ENCODE measurements at regions of chr13 and their contacts with region 1.

Region 1: DNA sequence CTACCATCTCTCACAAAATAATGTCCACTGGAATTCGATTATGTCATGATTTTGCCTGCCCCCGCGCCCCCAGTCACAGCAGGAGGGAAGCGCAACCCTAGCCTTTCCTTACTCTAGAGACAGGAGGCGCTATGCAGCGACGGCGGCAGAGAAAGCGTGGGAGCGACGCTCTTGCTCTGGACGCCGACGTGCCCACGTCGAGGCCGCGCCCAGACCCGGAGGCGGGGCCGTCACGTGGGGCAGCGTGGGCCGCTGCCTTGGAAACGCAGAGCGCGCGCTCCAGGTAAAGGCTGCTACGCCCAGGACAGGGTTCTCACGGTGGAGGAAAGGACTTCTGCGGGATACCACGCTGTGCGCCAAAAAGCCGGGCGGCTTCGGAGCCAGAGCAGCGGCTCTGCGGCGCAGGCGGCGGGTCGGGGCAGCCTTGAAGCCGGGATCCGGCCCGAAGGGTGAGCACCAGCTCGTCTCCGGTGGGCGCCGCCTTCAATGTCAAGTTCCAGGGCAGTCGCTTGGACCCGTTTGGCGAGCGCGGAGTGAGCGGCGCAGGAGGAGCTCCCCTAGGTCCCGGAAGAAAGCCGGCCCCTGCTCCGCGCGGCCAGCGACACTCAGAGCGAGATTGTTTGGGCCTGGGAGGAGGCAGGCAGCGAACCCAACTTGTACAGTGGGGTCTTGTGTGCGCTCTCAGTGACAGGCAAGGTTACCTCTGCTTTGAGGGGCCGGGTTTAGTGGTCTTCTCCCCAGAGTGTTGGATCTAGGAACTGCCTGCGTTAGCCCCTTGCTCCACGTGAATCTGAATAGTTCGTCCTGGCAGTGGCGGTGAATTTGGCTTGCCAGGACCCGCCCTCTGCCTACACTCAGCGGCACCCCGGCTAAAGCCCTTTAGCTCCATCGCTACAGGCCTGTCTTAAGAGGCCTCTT is 121.7 kb downstream of the MRPL57 start:
- DNase-seq: peak; percentile 85
- H3K4me3 Mint-ChIP-seq: peak overlapping the region; percentile 81
- H3K27ac Mint-ChIP-seq: no peak overlapping the region
- H3K4me1 Mint-ChIP-seq: peaks cover 20% of the 10 kb centered on the region
- H3K27me3 Mint-ChIP-seq: no peaks in the 10 kb centered on the region

Region 2: DNA sequence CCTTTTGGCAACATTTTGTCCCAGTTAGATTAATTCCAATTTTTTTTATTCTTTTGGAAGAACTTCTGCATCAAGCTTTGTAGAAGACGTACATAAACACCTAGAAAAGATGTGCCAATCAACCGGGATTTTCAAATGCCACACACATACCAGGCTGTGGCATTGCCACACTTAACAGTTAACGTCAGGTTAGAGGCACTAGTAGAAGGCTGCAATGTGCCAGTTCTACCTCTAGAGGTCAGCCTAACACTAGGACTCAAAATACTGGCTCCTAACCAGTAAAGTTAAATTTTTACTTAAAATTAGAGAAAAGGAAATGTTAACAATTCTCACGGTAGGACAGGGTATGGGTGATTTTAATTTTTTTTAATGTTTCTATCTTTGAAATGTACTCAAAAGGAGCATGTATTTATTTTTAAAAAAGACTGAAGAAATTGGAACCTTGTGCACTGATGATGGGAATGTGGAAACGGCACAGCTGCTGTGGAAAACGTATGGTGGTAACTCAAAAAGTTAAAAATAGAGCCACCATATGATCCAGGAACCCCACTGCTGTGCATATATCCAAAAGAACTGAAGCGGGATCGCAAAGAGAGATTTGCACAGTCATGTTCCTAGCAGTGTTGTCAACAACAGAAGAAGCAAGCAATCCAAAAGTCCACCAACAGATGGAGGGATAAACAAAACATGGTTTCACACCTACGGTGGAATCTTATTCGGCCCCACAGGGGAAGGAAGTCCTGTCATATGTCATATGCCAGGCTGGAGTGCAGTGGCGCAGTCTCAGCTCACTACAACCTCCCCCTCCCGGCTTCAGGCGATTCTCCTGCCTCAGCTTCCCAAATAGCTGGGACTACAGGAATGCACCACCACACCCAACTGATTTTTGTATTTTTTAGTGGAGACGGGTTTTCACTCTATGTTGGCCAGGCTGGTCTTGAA is 802.8 kb before region 1 on chr13:
- CTCF ChIA-PET with region 1: no interaction called
- intact Hi-C with region 1: loop called (anchors 10 kb)
- DNase-seq: peak; percentile 81
- H3K4me3 Mint-ChIP-seq: no peak overlapping the region
- H3K27ac Mint-ChIP-seq: no peak overlapping the region
- H3K4me1 Mint-ChIP-seq: no peaks in the 10 kb centered on the region
- H3K27me3 Mint-ChIP-seq: no peaks in the 10 kb centered on the region

Region 3: DNA sequence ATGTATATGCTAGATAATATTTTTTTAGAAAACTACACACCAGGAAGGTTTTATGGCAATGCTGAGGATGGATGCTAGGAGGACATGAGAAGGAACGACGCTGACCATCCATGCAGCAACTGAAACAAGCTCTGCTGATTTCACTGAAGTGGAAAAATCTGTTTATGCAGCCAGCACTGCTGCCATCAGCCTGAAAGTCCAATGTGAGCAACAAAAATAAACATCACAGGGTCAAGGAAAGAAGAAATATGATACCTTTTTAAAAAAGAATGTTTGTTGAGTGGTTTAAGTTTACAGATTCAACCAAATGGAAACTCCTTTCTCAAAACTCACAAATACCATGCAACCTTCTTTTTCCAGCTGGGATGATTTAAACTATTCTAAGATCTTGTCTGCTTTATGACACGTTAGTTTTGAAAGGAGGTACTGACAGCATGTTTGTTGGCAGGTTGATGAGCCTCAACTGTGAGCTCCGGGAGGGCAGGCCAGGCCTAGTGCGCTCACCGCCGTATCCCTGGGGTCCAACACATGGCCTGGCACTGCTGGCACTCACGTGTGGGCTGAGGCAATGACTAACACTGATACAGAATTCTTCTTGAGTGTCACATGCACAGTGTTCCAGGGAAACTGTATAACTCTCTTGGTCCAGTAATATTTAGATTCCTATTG is 283.5 kb before region 1 on chr13:
- CTCF ChIA-PET with region 1: no interaction called
- intact Hi-C with region 1: loop called (anchors 10 kb)
- DNase-seq: no peak
- H3K4me3 Mint-ChIP-seq: no peak overlapping the region
- H3K27ac Mint-ChIP-seq: no peak overlapping the region
- H3K4me1 Mint-ChIP-seq: peaks cover 15% of the 10 kb centered on the region
- H3K27me3 Mint-ChIP-seq: peaks cover 2% of the 10 kb centered on the region

Region 4: GRCh38 chr13:21326155-21327031 is 28.2 kb after region 1 on chr13:
- CTCF ChIA-PET with region 1: interaction called, 4 read pairs
- intact Hi-C with region 1: loop called (anchors 2 kb)
- DNase-seq: peak; percentile 34
- H3K4me3 Mint-ChIP-seq: peak overlapping the region; percentile 31
- H3K27ac Mint-ChIP-seq: no peak overlapping the region
- H3K4me1 Mint-ChIP-seq: peaks cover 22% of the 10 kb centered on the region
- H3K27me3 Mint-ChIP-seq: no peaks in the 10 kb centered on the region

Region 5: GRCh38 chr13:21402586-21403228 is 104.5 kb after region 1 on chr13:
- CTCF ChIA-PET with region 1: interaction called, 7 read pairs
- intact Hi-C with region 1: loop called (anchors 5 kb)
- DNase-seq: peak; percentile 43
- H3K4me3 Mint-ChIP-seq: no peak overlapping the region
- H3K27ac Mint-ChIP-seq: no peak overlapping the region
- H3K4me1 Mint-ChIP-seq: peaks cover 46% of the 10 kb centered on the region
- H3K27me3 Mint-ChIP-seq: no peaks in the 10 kb centered on the region

Region 6: DNA sequence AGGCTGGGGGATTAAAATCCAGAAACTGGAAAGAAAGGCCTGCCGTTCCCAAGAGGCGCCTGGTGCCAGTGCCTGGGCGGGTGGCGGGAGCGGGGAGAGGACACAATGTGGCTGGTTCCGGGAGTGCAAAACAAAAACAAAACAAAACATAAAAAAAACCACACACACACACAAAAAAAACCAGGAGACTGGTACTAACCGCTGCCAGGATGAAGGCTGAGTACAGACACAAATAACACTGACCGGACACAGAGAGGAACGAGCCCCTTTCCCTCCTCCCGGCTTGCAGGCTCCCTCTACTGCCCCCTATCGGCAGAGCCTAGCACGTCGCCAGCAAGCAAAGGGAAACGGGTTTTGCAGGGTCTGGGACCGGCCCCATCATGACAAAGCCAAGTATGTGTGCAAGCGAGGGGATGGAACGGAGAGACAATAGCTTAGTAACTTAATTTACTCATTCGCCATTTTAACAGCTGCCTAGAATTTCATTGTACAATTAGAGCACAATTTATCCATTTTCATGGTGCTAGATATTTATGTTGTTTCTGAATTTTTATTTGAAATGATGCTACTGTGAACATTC is 178.8 kb after region 1 on chr13:
- CTCF ChIA-PET with region 1: interaction called, 223 read pairs
- intact Hi-C with region 1: loop called (anchors 1 kb)
- DNase-seq: peak; percentile 91
- H3K4me3 Mint-ChIP-seq: peak overlapping the region; percentile 73
- H3K27ac Mint-ChIP-seq: peak overlapping the region; percentile 10
- H3K4me1 Mint-ChIP-seq: peaks cover 8% of the 10 kb centered on the region
- H3K27me3 Mint-ChIP-seq: no peaks in the 10 kb centered on the region

Region 7: GRCh38 chr13:21670883-21671619 is 372.9 kb after region 1 on chr13 and contains the start of gene FGF9:
- CTCF ChIA-PET with region 1: interaction called, 3 read pairs
- intact Hi-C with region 1: loop called (anchors 5 kb)
- DNase-seq: peak; percentile 79
- H3K4me3 Mint-ChIP-seq: peak within 1 kb of the TSS; percentile 80
- H3K27ac Mint-ChIP-seq: no peak within 1 kb of the TSS
- H3K4me1 Mint-ChIP-seq: peaks cover 34% of the 10 kb centered on the region
- H3K27me3 Mint-ChIP-seq: peaks cover 32% of the 10 kb centered on the region
- total RNA-seq, gene FGF9: not detected

Region 8: GRCh38 chr13:22740264-22740663 is 1442.1 kb after region 1 on chr13:
- CTCF ChIA-PET with region 1: no interaction called
- intact Hi-C with region 1: no loop called
- DNase-seq: peak; percentile 21
- H3K4me3 Mint-ChIP-seq: no peak overlapping the region
- H3K27ac Mint-ChIP-seq: no peak overlapping the region
- H3K4me1 Mint-ChIP-seq: no peaks in the 10 kb centered on the region
- H3K27me3 Mint-ChIP-seq: peaks cover 10% of the 10 kb centered on the region